ENCODE measurements at regions of chr6 and their contacts with region 1.

Region 1: GRCh38 chr6:71288228-71289001 is at the start of gene OGFRL1:
- DNase-seq: peak; percentile 67 to 79 (median 75)
- H3K4me3 ChIP-seq: peak within 1 kb of the TSS; percentile 52 to 66
- H3K4me3 Mint-ChIP-seq: peak within 1 kb of the TSS; percentile 84 to 91 (median 88)
- H3K27ac ChIP-seq: peak within 1 kb of the TSS; percentile 69
- H3K27ac Mint-ChIP-seq: peak within 1 kb of the TSS; percentile 72 to 88 (median 81)
- H3K4me1 ChIP-seq: peaks cover 40% of the 10 kb centered on the region
- H3K4me1 Mint-ChIP-seq: peaks cover 34 to 46% (median 43%) of the 10 kb centered on the region in 4 donors
- H3K27me3 ChIP-seq: no peaks in the 10 kb centered on the region
- H3K27me3 Mint-ChIP-seq: no peaks in the 10 kb centered on the region
- total RNA-seq, gene OGFRL1: 11.4 to 12.0 TPM

Region 2: GRCh38 chr6:70413114-70413991 is 875.1 kb before region 1 on chr6 and contains the start of gene FAM135A:
- CTCF ChIA-PET with region 1: no interaction called
- POLR2A ChIA-PET with region 1: no interaction called
- intact Hi-C with region 1: loop called (anchors 10 kb)
- DNase-seq: peak; percentile 90 to 96 (median 93)
- H3K4me3 ChIP-seq: peak within 1 kb of the TSS; percentile 59 to 62
- H3K4me3 Mint-ChIP-seq: peak within 1 kb of the TSS; percentile 93 to 97 (median 95)
- H3K27ac ChIP-seq: peak within 1 kb of the TSS; percentile 56
- H3K27ac Mint-ChIP-seq: peak within 1 kb of the TSS; percentile 90 to 96 (median 92)
- H3K4me1 ChIP-seq: peaks cover 17% of the 10 kb centered on the region
- H3K4me1 Mint-ChIP-seq: peaks cover 13 to 26% (median 20%) of the 10 kb centered on the region in 4 donors
- H3K27me3 ChIP-seq: no peaks in the 10 kb centered on the region
- H3K27me3 Mint-ChIP-seq: peaks cover 0 to 2% of the 10 kb centered on the region in 2 donors
- total RNA-seq, gene FAM135A: 11.3 to 14.5 TPM

Region 3: GRCh38 chr6:71190809-71191208 is 97.6 kb before region 1 on chr6:
- CTCF ChIA-PET with region 1: interaction called, 15 read pairs
- POLR2A ChIA-PET with region 1: interaction called, 9 read pairs
- intact Hi-C with region 1: no loop called
- DNase-seq: peak in 4 of 5 donors; percentile 13 to 18 (median 16)
- H3K4me3 ChIP-seq: no peak overlapping the region
- H3K4me3 Mint-ChIP-seq: no peak overlapping the region
- H3K27ac ChIP-seq: no peak overlapping the region
- H3K27ac Mint-ChIP-seq: no peak overlapping the region
- H3K4me1 ChIP-seq: no peaks in the 10 kb centered on the region
- H3K4me1 Mint-ChIP-seq: peaks cover 0 to 2% (median 0%) of the 10 kb centered on the region in 4 donors
- H3K27me3 ChIP-seq: no peaks in the 10 kb centered on the region
- H3K27me3 Mint-ChIP-seq: peaks cover 2 to 3% of the 10 kb centered on the region in 2 donors

Region 4: DNA sequence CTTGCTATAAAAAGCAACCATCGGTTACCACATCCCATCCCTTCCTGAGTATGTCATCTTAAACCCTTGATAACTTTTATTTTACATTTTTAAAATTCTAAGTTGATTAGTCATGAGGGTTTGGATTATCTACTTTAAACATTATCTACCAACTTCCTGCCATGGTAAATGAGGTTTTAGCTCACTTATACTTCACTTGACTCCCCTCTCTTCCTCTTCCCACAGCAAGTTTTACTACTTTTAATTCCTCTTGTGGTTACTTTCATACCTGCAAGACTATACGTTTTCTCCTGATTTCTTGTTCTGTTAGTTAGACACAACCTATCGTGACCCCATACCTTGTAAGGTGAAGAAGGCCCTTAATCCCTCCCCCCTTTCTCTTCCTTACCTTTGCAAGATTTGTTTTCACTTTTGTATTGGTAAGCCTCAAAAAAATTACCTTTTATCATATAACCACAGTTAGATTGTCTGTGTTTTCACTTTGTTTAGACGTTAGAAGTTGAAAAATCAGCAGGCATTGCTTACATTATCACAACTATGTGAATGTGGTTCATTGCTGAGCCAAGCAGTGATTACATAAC is 59.9 kb before region 1 on chr6:
- CTCF ChIA-PET with region 1: interaction called, 3 read pairs
- POLR2A ChIA-PET with region 1: interaction called, 41 read pairs
- intact Hi-C with region 1: loop called (anchors 2 kb)
- DNase-seq: peak; percentile 38 to 59 (median 51)
- H3K4me3 ChIP-seq: no peak overlapping the region
- H3K4me3 Mint-ChIP-seq: peak overlapping the region; percentile 13 to 88 (median 64)
- H3K27ac ChIP-seq: no peak overlapping the region
- H3K27ac Mint-ChIP-seq: peak overlapping the region; percentile 50 to 94 (median 83)
- H3K4me1 ChIP-seq: peaks cover 25% of the 10 kb centered on the region
- H3K4me1 Mint-ChIP-seq: peaks cover 19 to 33% (median 27%) of the 10 kb centered on the region in 4 donors
- H3K27me3 ChIP-seq: no peaks in the 10 kb centered on the region
- H3K27me3 Mint-ChIP-seq: no peaks in the 10 kb centered on the region

Region 5: GRCh38 chr6:71248306-71248765 is 40.1 kb before region 1 on chr6:
- CTCF ChIA-PET with region 1: interaction called, 3 read pairs
- POLR2A ChIA-PET with region 1: interaction called, 6 read pairs
- intact Hi-C with region 1: loop called (anchors 5 kb)
- DNase-seq: no peak
- H3K4me3 ChIP-seq: no peak overlapping the region
- H3K4me3 Mint-ChIP-seq: no peak overlapping the region
- H3K27ac ChIP-seq: no peak overlapping the region
- H3K27ac Mint-ChIP-seq: no peak overlapping the region
- H3K4me1 ChIP-seq: no peaks in the 10 kb centered on the region
- H3K4me1 Mint-ChIP-seq: peaks cover 2 to 13% (median 5%) of the 10 kb centered on the region in 4 donors
- H3K27me3 ChIP-seq: no peaks in the 10 kb centered on the region
- H3K27me3 Mint-ChIP-seq: peaks cover 0 to 3% of the 10 kb centered on the region in 2 donors

Region 6: GRCh38 chr6:71298459-71298858 is 10.0 kb after region 1 on chr6:
- CTCF ChIA-PET with region 1: interaction called, 12 read pairs
- POLR2A ChIA-PET with region 1: interaction called, 13 read pairs
- intact Hi-C with region 1: no loop called
- DNase-seq: no peak
- H3K4me3 ChIP-seq: no peak overlapping the region
- H3K4me3 Mint-ChIP-seq: no peak overlapping the region
- H3K27ac ChIP-seq: no peak overlapping the region
- H3K27ac Mint-ChIP-seq: no peak overlapping the region
- H3K4me1 ChIP-seq: no peaks in the 10 kb centered on the region
- H3K4me1 Mint-ChIP-seq: peaks cover 0 to 2% (median 2%) of the 10 kb centered on the region in 4 donors
- H3K27me3 ChIP-seq: no peaks in the 10 kb centered on the region
- H3K27me3 Mint-ChIP-seq: no peaks in the 10 kb centered on the region

Region 7: DNA sequence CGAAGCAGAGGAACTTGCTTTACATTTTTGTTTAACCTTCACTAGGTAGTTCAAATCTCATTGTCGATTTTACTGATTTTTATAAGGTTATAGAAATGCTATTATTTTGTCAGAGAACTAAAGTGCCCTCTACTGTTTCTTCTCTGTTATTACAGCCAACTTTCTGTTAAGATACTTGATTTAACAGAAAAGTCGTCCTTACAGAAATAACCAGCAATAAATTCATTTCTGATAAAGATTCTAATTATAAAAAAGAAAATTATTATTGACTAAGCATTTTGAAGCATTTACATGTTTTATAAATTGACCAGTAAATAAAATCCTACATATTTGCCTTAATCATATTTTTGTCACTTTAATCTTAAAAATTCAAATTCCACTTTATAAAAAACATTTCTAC is 61.0 kb after region 1 on chr6:
- CTCF ChIA-PET with region 1: no interaction called
- POLR2A ChIA-PET with region 1: no interaction called
- intact Hi-C with region 1: loop called (anchors 2 kb)
- DNase-seq: peak in 4 of 5 donors; percentile 16 to 38 (median 26)
- H3K4me3 ChIP-seq: no peak overlapping the region
- H3K4me3 Mint-ChIP-seq: no peak overlapping the region
- H3K27ac ChIP-seq: no peak overlapping the region
- H3K27ac Mint-ChIP-seq: no peak overlapping the region
- H3K4me1 ChIP-seq: no peaks in the 10 kb centered on the region
- H3K4me1 Mint-ChIP-seq: peaks cover 0 to 2% (median 0%) of the 10 kb centered on the region in 4 donors
- H3K27me3 ChIP-seq: no peaks in the 10 kb centered on the region
- H3K27me3 Mint-ChIP-seq: peaks cover 0 to 3% of the 10 kb centered on the region in 2 donors